HepG2 (cell line): ENCODE measurements at regions of chr3 and their contacts with region 1.

Region 1: DNA sequence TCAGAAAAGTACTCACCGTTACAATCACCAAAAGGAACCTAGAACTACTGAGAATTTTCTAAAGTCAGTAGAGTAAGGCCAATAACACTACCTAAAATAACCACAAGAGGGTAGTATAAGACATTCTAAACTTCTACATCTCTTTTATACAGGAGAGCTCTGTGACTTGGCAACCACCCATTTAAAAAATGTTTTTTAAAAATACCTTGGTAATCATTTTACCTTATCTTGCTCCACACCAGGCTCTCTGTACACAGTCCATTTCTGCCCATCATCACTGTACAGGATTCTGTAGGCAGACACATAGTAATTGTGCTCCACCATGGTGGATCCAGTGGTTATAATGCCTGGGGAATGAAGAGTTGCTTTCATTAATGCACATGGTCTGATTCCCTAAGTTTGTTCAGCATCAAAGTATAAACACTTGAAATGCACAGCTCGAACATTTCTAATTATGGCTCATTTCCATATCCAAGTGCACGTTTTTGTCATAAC is 54.5 kb downstream of the ST3GAL6 start:
- DNase-seq: peak; percentile 31
- ATAC-seq: peak; percentile 70
- H3K4me3 ChIP-seq: no peak overlapping the region
- H3K27ac ChIP-seq: no peak overlapping the region
- H3K4me1 ChIP-seq: peaks cover 8% of the 10 kb centered on the region
- H3K27me3 ChIP-seq: no peaks in the 10 kb centered on the region; a peak in 1 of 5 replicates
- CTCF ChIP-seq: peak; percentile 59
- EP300 ChIP-seq: no peak
- POLR2A ChIP-seq: no peak
- RAD21 ChIP-seq: peak; percentile 48; the same call in 1 of the 2 replicates

Region 2: DNA sequence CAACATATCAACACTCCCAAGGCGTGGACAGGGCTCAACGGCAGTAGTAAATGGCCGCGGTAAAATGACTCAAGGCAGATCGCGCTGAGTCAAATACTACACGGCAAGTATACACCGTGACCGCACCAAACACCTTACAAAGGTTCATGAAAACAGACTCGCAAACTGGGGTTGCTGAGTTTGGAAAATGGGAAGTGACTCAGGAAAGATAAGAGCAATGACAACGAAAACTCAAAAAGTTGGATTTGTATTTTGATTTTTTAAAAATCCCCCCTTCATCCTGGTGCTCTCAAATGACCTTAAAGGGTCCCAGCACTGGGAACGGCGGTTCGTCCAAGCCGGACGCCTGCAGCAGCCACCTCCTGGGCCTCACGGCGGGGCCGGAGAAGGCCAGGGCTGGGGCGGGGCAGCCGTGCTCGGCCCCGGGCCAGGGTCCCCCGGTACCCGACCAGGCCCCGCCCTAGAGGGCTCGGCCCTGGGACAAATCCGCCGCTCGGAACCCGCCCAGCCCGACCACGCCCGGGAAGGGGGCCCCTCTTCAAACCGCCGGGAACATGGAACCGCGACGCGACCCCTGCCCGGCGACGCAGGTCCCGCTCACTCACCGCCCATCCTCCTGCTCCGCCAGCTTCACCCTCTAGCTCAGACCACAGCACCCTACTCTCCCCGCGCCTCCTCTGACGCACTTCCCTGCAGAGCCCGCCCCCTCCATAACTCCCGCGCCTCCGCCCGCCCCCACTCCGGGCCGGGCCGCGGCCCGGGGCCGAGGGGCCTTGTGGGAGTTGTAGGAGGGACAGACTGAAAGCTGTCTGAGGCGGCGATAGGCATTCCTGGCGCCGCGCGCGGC is 295.1 kb before region 1 on chr3 and contains the start of gene CLDND1:
- CTCF ChIA-PET with region 1: no interaction called
- POLR2A ChIA-PET with region 1: no interaction called
- in situ Hi-C with region 1: no loop called
- intact Hi-C with region 1: loop called (anchors 10 kb)
- DNase-seq: peak; percentile 91
- ATAC-seq: peak; percentile 99
- H3K4me3 ChIP-seq: peak within 1 kb of the TSS; percentile 71 to 76 (median 74)
- H3K27ac ChIP-seq: peak within 1 kb of the TSS; percentile 69
- H3K4me1 ChIP-seq: peaks cover 17% of the 10 kb centered on the region
- H3K27me3 ChIP-seq: no peaks in the 10 kb centered on the region; a peak in 1 of 5 replicates
- CTCF ChIP-seq: no peak
- EP300 ChIP-seq: no peak; a peak in 1 of 4 replicates
- POLR2A ChIP-seq: peak; percentile 81 to 92
- RAD21 ChIP-seq: peak; percentile 35
- total RNA-seq, gene CLDND1: 30.3 and 50.8 TPM in 2 replicates

Region 3: DNA sequence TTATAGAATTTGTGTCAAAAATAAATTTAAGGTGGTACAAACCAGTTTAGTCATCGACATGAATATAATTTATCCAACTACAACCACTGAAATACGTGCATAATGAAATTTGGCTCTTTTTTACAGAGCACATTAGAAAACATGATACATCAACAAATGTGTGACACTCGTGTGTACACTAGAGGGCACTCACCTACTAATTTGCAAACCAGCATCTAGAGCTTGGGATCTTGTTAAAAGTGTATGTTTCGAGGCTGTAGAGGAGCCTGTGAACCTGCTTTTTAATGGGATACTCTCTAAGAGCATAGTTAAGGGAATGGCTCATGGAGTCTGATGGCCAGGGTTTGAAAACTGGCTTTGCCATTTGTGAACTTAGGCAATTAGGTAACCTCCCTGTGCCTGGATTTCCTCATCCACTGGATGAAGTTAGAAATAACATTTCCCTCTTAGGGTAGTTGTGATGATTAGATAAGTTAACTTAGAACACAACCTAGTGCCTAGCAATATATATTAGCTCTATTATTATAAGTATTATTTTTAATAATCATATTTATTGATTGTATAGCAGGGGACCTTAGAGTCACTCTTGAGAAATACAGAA is 215.4 kb before region 1 on chr3:
- CTCF ChIA-PET with region 1: interaction called, 24 read pairs
- POLR2A ChIA-PET with region 1: no interaction called
- in situ Hi-C with region 1: loop called (anchors 5 kb)
- intact Hi-C with region 1: loop called (anchors 1 kb)
- DNase-seq: peak; percentile 53
- ATAC-seq: peak; percentile 87
- H3K4me3 ChIP-seq: no peak overlapping the region
- H3K27ac ChIP-seq: no peak overlapping the region
- H3K4me1 ChIP-seq: peaks cover 42% of the 10 kb centered on the region
- H3K27me3 ChIP-seq: no peaks in the 10 kb centered on the region
- CTCF ChIP-seq: peak; percentile 83
- EP300 ChIP-seq: no peak
- POLR2A ChIP-seq: no peak
- RAD21 ChIP-seq: peak; percentile 68

Region 4: DNA sequence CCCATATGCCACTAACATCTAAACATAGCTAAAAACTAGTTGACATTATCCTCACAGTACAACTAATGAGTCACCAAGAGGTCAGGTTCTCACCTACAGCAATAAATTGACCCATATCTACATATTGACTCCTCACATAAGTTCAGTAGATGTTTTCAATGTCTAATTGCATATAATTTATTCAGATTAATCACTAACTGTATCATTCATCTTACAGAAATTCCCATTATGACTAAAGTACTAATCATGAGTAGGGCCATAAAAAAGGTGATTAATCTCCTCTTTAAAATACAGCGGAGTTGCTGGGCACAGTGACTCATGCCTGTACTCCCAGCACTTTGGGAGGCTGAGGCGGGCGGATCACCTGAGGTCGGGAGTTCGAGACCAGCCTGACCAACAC is 136.9 kb before region 1 on chr3:
- CTCF ChIA-PET with region 1: interaction called, 4 read pairs
- POLR2A ChIA-PET with region 1: no interaction called
- in situ Hi-C with region 1: no loop called
- intact Hi-C with region 1: loop called (anchors 5 kb)
- DNase-seq: no peak
- ATAC-seq: no peak
- H3K4me3 ChIP-seq: no peak overlapping the region
- H3K27ac ChIP-seq: no peak overlapping the region
- H3K4me1 ChIP-seq: peaks cover 14% of the 10 kb centered on the region
- H3K27me3 ChIP-seq: no peaks in the 10 kb centered on the region
- CTCF ChIP-seq: no peak
- EP300 ChIP-seq: no peak
- POLR2A ChIP-seq: no peak
- RAD21 ChIP-seq: no peak

Region 5: GRCh38 chr3:98798820-98799219 is 18.8 kb before region 1 on chr3:
- CTCF ChIA-PET with region 1: no interaction called
- POLR2A ChIA-PET with region 1: no interaction called
- in situ Hi-C with region 1: no loop called
- intact Hi-C with region 1: loop called (anchors 2 kb)
- DNase-seq: no peak
- ATAC-seq: no peak
- H3K4me3 ChIP-seq: no peak overlapping the region
- H3K27ac ChIP-seq: no peak overlapping the region
- H3K4me1 ChIP-seq: peaks cover 12% of the 10 kb centered on the region
- H3K27me3 ChIP-seq: no peaks in the 10 kb centered on the region
- CTCF ChIP-seq: no peak
- EP300 ChIP-seq: no peak
- POLR2A ChIP-seq: no peak
- RAD21 ChIP-seq: no peak

Region 6: DNA sequence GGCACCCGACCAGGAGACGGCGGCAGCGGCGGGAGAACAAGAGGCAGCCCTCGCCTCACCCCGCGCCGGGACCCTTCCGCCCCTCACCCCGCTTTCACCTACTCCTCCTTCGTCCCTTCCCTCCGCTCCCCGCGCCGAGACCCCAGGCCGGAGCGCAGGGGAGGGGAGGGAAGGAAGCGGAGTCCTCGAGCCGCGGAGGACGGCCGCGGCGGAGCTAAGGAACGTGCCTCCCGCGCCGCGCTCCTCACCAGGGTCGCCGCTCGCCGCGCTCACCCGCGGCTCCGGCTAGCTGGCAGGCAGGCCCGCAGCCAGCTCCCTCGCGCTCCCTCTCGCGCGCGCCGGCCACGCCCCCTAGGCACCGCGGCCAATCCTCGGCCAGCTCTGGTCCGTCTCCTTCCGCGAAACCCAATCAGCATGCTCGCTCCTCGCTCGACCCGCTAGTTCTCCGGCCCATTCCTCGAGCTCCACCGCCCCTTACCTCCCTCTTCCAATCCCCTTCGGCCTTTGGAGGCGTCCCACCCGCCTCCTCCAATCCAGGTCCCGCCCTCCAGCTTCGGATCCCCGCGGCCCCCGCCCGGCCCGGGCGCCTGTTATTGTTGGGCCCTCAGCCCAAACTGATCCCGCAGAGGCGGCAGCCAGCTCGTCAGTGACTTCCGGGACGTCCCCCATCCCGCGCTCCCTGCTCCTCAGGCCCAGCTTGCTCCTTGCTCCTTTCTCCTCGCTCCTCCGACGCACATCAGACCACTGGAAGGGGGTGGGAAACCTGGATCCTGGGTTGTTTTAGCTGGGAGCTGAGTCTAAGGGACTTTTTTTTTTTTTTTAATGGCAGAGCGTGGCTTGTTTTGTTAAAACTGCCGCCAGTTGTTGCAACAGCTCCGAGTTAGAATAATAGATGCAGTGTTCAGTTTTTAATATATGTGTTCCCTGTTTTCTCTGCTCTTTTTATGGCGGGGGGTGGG is 84.1 kb after region 1 on chr3 and contains the start of gene DCBLD2:
- CTCF ChIA-PET with region 1: no interaction called
- POLR2A ChIA-PET with region 1: no interaction called
- in situ Hi-C with region 1: no loop called
- intact Hi-C with region 1: loop called (anchors 1 kb)
- DNase-seq: peak; percentile 97
- ATAC-seq: peak; percentile 97
- H3K4me3 ChIP-seq: peak within 1 kb of the TSS; percentile 87 to 98 (median 88)
- H3K27ac ChIP-seq: peak within 1 kb of the TSS; percentile 85
- H3K4me1 ChIP-seq: peaks cover 38% of the 10 kb centered on the region
- H3K27me3 ChIP-seq: no peaks in the 10 kb centered on the region; a peak in 1 of 5 replicates
- CTCF ChIP-seq: no peak
- EP300 ChIP-seq: peak in 1 of 2 experiments; percentile 27; a peak in 1 of 4 replicates
- POLR2A ChIP-seq: peak; percentile 93
- RAD21 ChIP-seq: no peak; the same call in 1 of the 2 replicates
- total RNA-seq, gene DCBLD2: 40.2 and 56.9 TPM in 2 replicates

Region 7: GRCh38 chr3:98930413-98930812 is 112.8 kb after region 1 on chr3:
- CTCF ChIA-PET with region 1: no interaction called
- POLR2A ChIA-PET with region 1: no interaction called
- in situ Hi-C with region 1: no loop called
- intact Hi-C with region 1: no loop called
- DNase-seq: no peak
- ATAC-seq: no peak
- H3K4me3 ChIP-seq: no peak overlapping the region
- H3K27ac ChIP-seq: no peak overlapping the region
- H3K4me1 ChIP-seq: no peaks in the 10 kb centered on the region
- H3K27me3 ChIP-seq: no peaks in the 10 kb centered on the region
- CTCF ChIP-seq: no peak
- EP300 ChIP-seq: no peak
- POLR2A ChIP-seq: no peak
- RAD21 ChIP-seq: no peak

Region 8: DNA sequence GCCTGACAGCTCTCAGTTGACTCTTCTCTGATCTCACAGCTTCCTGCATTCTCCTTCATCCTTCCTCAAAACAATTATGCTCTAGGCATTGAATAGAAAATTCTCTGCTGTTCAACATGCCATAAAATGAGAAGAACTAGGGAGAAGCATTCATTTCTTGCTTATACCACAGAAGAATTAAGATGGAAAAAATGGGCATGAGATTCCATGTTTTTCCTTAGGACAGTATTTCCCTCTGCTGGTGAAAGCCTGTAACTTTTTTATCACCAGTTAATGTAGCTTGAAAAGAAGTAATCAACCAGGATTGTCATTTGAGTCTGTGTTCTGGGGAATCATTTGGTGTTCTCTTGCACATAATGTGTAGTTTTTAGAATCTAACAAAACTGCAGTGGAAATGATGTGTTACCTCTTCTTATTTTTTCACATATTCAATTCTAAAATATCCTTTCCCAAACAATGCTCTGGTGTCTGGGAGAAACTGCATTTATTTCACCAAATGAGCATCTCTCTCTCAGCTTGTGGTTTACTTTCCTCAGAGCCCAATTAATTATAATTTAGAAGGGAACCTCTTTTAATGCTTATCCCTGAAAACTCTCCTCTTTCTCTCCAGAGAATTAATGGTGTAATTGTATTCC is 176.7 kb after region 1 on chr3:
- CTCF ChIA-PET with region 1: interaction called, 46 read pairs
- POLR2A ChIA-PET with region 1: no interaction called
- in situ Hi-C with region 1: loop called (anchors 5 kb)
- intact Hi-C with region 1: loop called (anchors 1 kb)
- DNase-seq: peak; percentile 34
- ATAC-seq: peak; percentile 57
- H3K4me3 ChIP-seq: no peak overlapping the region
- H3K27ac ChIP-seq: no peak overlapping the region
- H3K4me1 ChIP-seq: no peaks in the 10 kb centered on the region
- H3K27me3 ChIP-seq: no peaks in the 10 kb centered on the region; a peak in 1 of 5 replicates
- CTCF ChIP-seq: peak; percentile 62
- EP300 ChIP-seq: no peak
- POLR2A ChIP-seq: no peak
- RAD21 ChIP-seq: peak; percentile 29; the same call in 1 of the 2 replicates